Activated naive CD4-positive, alpha-beta T cell treated with anti-CD3 and anti-CD28 coated beads for 36 hours (primary cell): ENCODE measurements at regions of chr2 and their contacts with region 1.

Region 1: DNA sequence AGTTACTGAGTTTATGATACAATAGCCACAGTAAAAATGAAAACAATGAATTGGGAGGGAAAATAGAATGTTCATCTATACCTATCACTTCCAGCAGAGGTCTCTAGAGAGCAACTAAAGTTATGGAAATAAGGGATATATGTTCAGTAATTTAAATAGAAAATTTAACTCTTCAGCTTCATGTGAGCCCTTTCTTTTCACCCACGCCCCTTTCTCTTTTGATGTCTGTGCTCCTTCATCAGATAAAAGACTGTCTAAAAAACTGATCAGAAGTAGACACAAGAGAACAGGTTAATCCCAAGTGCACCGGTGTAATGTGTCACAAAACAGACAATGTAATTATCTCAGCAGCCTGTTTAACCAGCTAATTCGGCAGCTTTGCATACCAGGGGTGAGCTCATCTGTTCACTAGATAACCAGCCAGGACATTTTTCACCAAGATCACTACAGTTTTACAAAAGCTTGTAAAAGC is 238.5 kb upstream of the ERBB4 start:
- DNase-seq: no peak
- H3K4me3 Mint-ChIP-seq: no peak overlapping the region
- H3K27ac Mint-ChIP-seq: no peak overlapping the region
- H3K4me1 Mint-ChIP-seq: no peaks in the 10 kb centered on the region
- H3K27me3 Mint-ChIP-seq: peaks cover 2% of the 10 kb centered on the region

Region 2: GRCh38 chr2:212686285-212686895 is 90.7 kb before region 1 on chr2:
- CTCF ChIA-PET with region 1: interaction called, 3 read pairs
- intact Hi-C with region 1: loop called (anchors 1 kb)
- DNase-seq: peak; percentile 72
- H3K4me3 Mint-ChIP-seq: no peak overlapping the region
- H3K27ac Mint-ChIP-seq: no peak overlapping the region
- H3K4me1 Mint-ChIP-seq: no peaks in the 10 kb centered on the region
- H3K27me3 Mint-ChIP-seq: no peaks in the 10 kb centered on the region

Region 3: GRCh38 chr2:212892193-212892592 is 115.1 kb after region 1 on chr2:
- CTCF ChIA-PET with region 1: interaction called, 5 read pairs
- intact Hi-C with region 1: loop called (anchors 1 kb)
- DNase-seq: no peak
- H3K4me3 Mint-ChIP-seq: no peak overlapping the region
- H3K27ac Mint-ChIP-seq: no peak overlapping the region
- H3K4me1 Mint-ChIP-seq: no peaks in the 10 kb centered on the region
- H3K27me3 Mint-ChIP-seq: no peaks in the 10 kb centered on the region